PC-3 (cell line): ENCODE measurements at regions of chr3 and their contacts with region 1.

Region 1: GRCh38 chr3:122793568-122794416 is at the start of gene HSPBAP1:
- DNase-seq: peak; percentile 95
- ATAC-seq: peak; percentile 65
- H3K4me3 ChIP-seq: peak within 1 kb of the TSS; percentile 81
- H3K27ac ChIP-seq: peak within 1 kb of the TSS; percentile 89
- H3K4me1 ChIP-seq: peaks cover 33% of the 10 kb centered on the region
- H3K27me3 ChIP-seq: no peaks in the 10 kb centered on the region
- CTCF ChIP-seq: no peak
- total RNA-seq, gene HSPBAP1: 6.4 and 13.4 TPM in 2 replicates

Region 2: DNA sequence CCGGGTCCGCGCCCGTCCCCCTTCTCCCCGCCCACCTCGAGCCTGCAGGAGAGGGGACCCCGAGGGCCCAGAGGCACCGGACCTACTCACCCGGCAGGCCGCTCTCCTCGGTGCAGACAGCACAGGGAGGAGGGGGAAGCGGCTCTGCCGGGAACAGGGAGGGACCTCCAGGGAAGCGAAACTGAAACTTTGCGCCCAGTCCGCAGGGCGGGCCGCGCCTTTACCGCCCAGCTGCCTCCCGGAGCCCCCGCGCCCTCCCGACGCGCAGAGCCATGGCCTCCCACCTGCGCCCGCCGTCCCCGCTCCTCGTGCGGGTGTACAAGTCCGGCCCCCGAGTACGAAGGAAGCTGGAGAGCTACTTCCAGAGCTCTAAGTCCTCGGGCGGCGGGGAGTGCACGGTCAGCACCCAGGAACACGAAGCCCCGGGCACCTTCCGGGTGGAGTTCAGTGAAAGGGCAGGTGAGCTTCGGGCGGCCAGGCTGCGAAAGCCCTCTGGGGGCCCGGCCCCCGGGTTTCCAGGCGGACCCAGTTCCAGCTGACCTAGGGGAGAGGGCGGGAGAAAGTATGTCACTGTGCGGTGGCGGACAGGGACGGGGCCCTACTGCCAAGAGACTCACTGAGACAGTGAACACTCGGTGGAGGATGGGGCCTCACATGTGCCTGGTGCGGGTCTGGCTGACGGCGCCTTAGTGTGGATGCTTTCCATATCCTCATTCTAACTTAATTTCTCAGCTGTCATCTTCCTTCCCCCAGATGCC is 229.5 kb before region 1 on chr3 and contains the starts of genes DTX3L and PARP9:
- CTCF ChIA-PET with region 1: no interaction called
- POLR2A ChIA-PET with region 1: no interaction called
- intact Hi-C with region 1: loop called (anchors 5 kb)
- DNase-seq: peak; percentile 83
- ATAC-seq: peak; percentile 89
- H3K4me3 ChIP-seq: peak within 1 kb of the TSS; percentile 81
- H3K27ac ChIP-seq: peak within 1 kb of the TSS; percentile 81
- H3K4me1 ChIP-seq: peaks cover 20% of the 10 kb centered on the region
- H3K27me3 ChIP-seq: no peaks in the 10 kb centered on the region
- CTCF ChIP-seq: no peak
- total RNA-seq, gene DTX3L: 11.1 and 11.9 TPM in 2 replicates
- total RNA-seq, gene PARP9: 13.8 and 14.8 TPM in 2 replicates

Region 3: GRCh38 chr3:122754929-122755328 is 38.9 kb before region 1 on chr3:
- CTCF ChIA-PET with region 1: no interaction called
- POLR2A ChIA-PET with region 1: no interaction called
- intact Hi-C with region 1: loop called (anchors 5 kb)
- DNase-seq: peak; percentile 85
- ATAC-seq: peak; percentile 96
- H3K4me3 ChIP-seq: no peak overlapping the region
- H3K27ac ChIP-seq: no peak overlapping the region
- H3K4me1 ChIP-seq: no peaks in the 10 kb centered on the region
- H3K27me3 ChIP-seq: no peaks in the 10 kb centered on the region
- CTCF ChIP-seq: peak; percentile 97

Region 4: GRCh38 chr3:122810734-122811133 is 16.9 kb after region 1 on chr3:
- CTCF ChIA-PET with region 1: no interaction called
- POLR2A ChIA-PET with region 1: no interaction called
- intact Hi-C with region 1: loop called (anchors 2 kb)
- DNase-seq: peak; percentile 20
- ATAC-seq: peak; percentile 77
- H3K4me3 ChIP-seq: no peak overlapping the region
- H3K27ac ChIP-seq: no peak overlapping the region
- H3K4me1 ChIP-seq: no peaks in the 10 kb centered on the region; the same call in 1 of the 2 replicates
- H3K27me3 ChIP-seq: no peaks in the 10 kb centered on the region
- CTCF ChIP-seq: no peak

Region 5: DNA sequence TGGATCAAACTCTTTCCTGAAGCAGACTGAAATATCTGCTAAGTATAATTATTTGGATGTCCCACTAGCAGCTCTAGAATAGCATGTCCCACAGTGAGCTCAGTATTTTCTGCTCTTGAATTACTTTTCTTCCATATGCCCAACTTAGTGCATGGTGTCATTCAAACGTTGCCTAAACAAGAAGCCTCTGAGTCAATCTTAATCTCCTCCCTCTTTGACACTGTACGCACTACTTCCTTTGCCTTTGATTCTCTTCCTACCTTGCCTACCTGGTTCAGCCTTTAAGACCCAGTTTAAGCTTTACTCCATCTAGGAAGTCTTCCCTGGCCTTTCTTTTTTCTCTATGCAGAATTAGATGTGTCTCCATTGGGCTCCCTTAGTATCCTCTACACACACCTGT is 462.5 kb after region 1 on chr3:
- CTCF ChIA-PET with region 1: no interaction called
- POLR2A ChIA-PET with region 1: no interaction called
- intact Hi-C with region 1: no loop called
- DNase-seq: peak; percentile 26
- ATAC-seq: peak; percentile 60
- H3K4me3 ChIP-seq: no peak overlapping the region
- H3K27ac ChIP-seq: no peak overlapping the region
- H3K4me1 ChIP-seq: no peaks in the 10 kb centered on the region
- H3K27me3 ChIP-seq: no peaks in the 10 kb centered on the region
- CTCF ChIP-seq: no peak